PC-9 (cell line): ENCODE measurements at regions of chr17 and their contacts with region 1.

Region 1: GRCh38 chr17:15944759-15945529 is at the start of gene ADORA2B:
- DNase-seq: peak; percentile 51 to 84
- H3K4me3 ChIP-seq: peak within 1 kb of the TSS; percentile 91
- H3K27ac ChIP-seq: peak within 1 kb of the TSS; percentile 92
- H3K4me1 ChIP-seq: peaks cover 26% of the 10 kb centered on the region
- H3K27me3 ChIP-seq: no peaks in the 10 kb centered on the region
- CTCF ChIP-seq: peak; percentile 30; the same call in 1 of the 2 replicates
- total RNA-seq, gene ADORA2B: 32.6 and 42.7 TPM in 2 replicates

Region 2: DNA sequence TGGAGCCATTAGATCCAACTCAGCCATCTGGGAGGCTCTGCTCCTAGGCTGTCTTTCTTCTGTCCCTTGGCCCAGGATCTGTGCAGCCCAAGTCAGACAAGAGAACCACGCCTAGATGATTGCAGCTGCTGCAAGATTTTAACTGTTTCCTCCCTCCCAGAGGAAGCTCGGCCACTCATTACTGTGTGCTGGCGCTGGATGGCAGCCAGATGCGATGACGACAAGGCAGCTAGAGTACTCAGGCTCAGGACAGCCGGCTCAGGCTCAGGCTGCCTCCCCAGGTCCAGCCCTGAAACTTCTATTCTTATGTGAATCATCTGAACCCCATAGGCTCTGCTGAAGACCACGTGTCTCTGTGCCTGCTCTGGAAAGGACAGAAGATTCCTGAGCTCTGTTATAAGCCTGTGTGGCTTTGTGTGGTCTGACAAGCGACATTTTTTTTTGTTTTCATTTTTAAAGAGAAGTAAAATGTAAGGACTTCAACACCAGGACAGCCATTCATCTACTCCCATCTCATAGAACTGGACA is 293.3 kb before region 1 on chr17:
- CTCF ChIA-PET with region 1: no interaction called
- POLR2A ChIA-PET with region 1: interaction called, 7 read pairs
- intact Hi-C with region 1: loop called (anchors 2 kb)
- DNase-seq: peak; percentile 96 to 97
- H3K4me3 ChIP-seq: peak overlapping the region; percentile 88
- H3K27ac ChIP-seq: peak overlapping the region; percentile 97
- H3K4me1 ChIP-seq: peaks cover 41% of the 10 kb centered on the region
- H3K27me3 ChIP-seq: no peaks in the 10 kb centered on the region
- CTCF ChIP-seq: no peak

Region 3: DNA sequence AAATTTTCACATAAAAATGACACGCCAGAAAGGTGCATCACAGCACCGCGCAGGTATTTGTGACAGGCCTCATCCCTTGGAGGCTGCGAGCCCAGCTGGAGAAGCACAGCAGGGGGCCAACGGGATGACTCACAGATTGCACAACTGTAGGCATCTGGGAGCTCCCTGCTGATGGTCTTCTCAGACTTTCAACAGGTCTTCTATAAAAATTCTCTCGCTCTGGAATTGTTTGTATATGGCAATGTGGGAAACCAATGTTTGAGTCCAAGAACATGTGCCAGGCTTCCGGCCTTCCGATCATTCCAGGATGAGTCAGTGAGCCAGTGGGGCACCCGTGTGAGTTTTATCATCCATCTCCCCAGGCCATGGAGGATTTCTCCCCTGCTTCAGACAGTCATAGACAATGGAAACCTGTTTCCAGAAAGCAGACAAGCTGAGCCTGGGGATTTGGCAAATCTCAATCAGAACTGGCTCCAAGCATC is 24.1 kb before region 1 on chr17:
- CTCF ChIA-PET with region 1: no interaction called
- POLR2A ChIA-PET with region 1: interaction called, 3 read pairs
- intact Hi-C with region 1: loop called (anchors 2 kb)
- DNase-seq: peak; percentile 96
- H3K4me3 ChIP-seq: no peak overlapping the region
- H3K27ac ChIP-seq: peak overlapping the region; percentile 95
- H3K4me1 ChIP-seq: peaks cover 41% of the 10 kb centered on the region
- H3K27me3 ChIP-seq: no peaks in the 10 kb centered on the region
- CTCF ChIP-seq: no peak

Region 4: DNA sequence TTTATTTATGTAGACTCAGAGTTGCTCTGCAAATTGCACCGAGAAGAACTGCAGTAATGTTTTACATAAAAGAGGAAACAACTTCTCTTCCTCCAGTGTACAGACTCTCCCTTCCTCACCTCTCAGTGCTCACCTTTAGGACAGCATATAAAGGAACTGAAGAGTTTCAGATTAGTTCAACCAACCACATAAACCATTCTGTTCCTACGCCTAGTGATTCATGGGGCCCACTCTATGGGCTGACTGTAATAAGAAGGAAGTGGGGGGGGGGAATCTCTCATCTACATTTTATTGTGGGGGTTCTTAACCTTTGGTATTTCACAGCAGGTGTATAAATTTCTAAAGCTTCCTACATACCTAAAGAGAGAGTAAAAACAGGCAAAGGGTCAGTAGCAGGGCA is 36.3 kb after region 1 on chr17:
- CTCF ChIA-PET with region 1: interaction called, 3 read pairs
- POLR2A ChIA-PET with region 1: no interaction called
- intact Hi-C with region 1: loop called (anchors 1 kb)
- DNase-seq: peak in 1 of 2 experiments; percentile 93
- H3K4me3 ChIP-seq: peak overlapping the region; percentile 10; the same call in 1 of the 2 replicates
- H3K27ac ChIP-seq: peak overlapping the region; percentile 93
- H3K4me1 ChIP-seq: peaks cover 42% of the 10 kb centered on the region
- H3K27me3 ChIP-seq: no peaks in the 10 kb centered on the region
- CTCF ChIP-seq: no peak

Region 5: GRCh38 chr17:16371742-16372141 is 426.8 kb after region 1 on chr17:
- CTCF ChIA-PET with region 1: no interaction called
- POLR2A ChIA-PET with region 1: no interaction called
- intact Hi-C with region 1: no loop called
- DNase-seq: no peak
- H3K4me3 ChIP-seq: no peak overlapping the region
- H3K27ac ChIP-seq: no peak overlapping the region
- H3K4me1 ChIP-seq: no peaks in the 10 kb centered on the region
- H3K27me3 ChIP-seq: no peaks in the 10 kb centered on the region
- CTCF ChIP-seq: no peak